A549 (cell line): ENCODE measurements at regions of chr16 and their contacts with region 1.

Region 1: GRCh38 chr16:30032083-30032819 is 1.2 kb upstream of the TLCD3B start:
- DNase-seq: peak in 1 of 2 experiments; percentile 79
- ATAC-seq: peak in 1 of 2 experiments; percentile 75; a peak in 3 of 6 replicates
- H3K4me3 ChIP-seq: no peak overlapping the region
- H3K27ac ChIP-seq: no peak overlapping the region
- H3K4me1 ChIP-seq: 0 out of 3 replicates have a peak, but pooled peaks cover 7% of the 10 kb centered on the region
- CTCF ChIP-seq: peak; percentile 91
- EP300 ChIP-seq: no peak
- POLR2A ChIP-seq: no peak
- RAD21 ChIP-seq: peak; percentile 91 to 94

Region 2: GRCh38 chr16:29694384-29695195 is 337.7 kb before region 1 on chr16:
- CTCF ChIA-PET with region 1: interaction called, 48 read pairs
- POLR2A ChIA-PET with region 1: no interaction called
- DNase-seq: no peak
- ATAC-seq: 0 out of 6 replicates have a peak, but pooled peaks of 1 of the 2 experiments have one; percentile 5
- H3K4me3 ChIP-seq: no peak overlapping the region
- H3K27ac ChIP-seq: no peak overlapping the region
- H3K4me1 ChIP-seq: peaks cover 5% of the 10 kb centered on the region; the same call in 1 of the 3 replicates
- CTCF ChIP-seq: no peak
- EP300 ChIP-seq: no peak
- POLR2A ChIP-seq: no peak
- RAD21 ChIP-seq: no peak

Region 3: DNA sequence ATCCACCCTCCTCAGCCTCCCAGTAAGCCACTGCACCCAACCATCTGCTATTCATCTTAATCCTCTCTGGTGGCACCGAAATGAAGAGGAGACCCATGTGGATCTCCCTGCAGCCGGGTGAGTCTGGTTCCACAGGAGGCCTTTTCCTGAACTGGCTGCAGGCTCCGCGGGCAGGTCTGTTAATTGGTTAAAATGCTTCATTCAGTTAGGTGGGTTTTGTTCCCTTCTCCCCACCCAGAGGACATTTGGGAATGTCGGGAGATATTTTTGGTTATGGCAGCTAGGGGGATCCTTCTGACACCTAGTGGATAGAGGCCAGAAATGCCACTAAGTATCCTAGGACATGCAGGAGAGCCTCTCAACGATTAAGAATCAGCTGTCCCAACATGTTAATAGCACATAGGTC is 303.1 kb before region 1 on chr16:
- CTCF ChIA-PET with region 1: interaction called, 14 read pairs
- POLR2A ChIA-PET with region 1: no interaction called
- DNase-seq: peak; percentile 68 to 83
- ATAC-seq: peak; percentile 96 to 98
- H3K4me3 ChIP-seq: peak overlapping the region; percentile 34; the same call in 2 of the 3 replicates
- H3K27ac ChIP-seq: peak overlapping the region; percentile 54 to 71; a peak in 4 of 6 replicates
- H3K4me1 ChIP-seq: 0 out of 3 replicates have a peak, but pooled peaks cover 3% of the 10 kb centered on the region
- CTCF ChIP-seq: peak; percentile 64
- EP300 ChIP-seq: no peak
- POLR2A ChIP-seq: no peak
- RAD21 ChIP-seq: peak; percentile 52; a peak in 4 of 5 replicates

Region 4: GRCh38 chr16:29815793-29816693 is 216.2 kb before region 1 on chr16 and contains the start of gene PAGR1:
- CTCF ChIA-PET with region 1: interaction called, 33 read pairs
- POLR2A ChIA-PET with region 1: interaction called, 6 read pairs
- DNase-seq: peak; percentile 95 to 100
- ATAC-seq: peak; percentile 49 to 72
- H3K4me3 ChIP-seq: peak within 1 kb of the TSS; percentile 92
- H3K27ac ChIP-seq: peak within 1 kb of the TSS; percentile 98 to 99
- H3K4me1 ChIP-seq: peaks cover 39% of the 10 kb centered on the region
- CTCF ChIP-seq: peak; percentile 92
- EP300 ChIP-seq: no peak
- POLR2A ChIP-seq: peak; percentile 88
- RAD21 ChIP-seq: peak; percentile 51 to 68
- polyA plus RNA-seq, gene PAGR1: 18.9 and 26.7 TPM in 2 replicates

Region 5: DNA sequence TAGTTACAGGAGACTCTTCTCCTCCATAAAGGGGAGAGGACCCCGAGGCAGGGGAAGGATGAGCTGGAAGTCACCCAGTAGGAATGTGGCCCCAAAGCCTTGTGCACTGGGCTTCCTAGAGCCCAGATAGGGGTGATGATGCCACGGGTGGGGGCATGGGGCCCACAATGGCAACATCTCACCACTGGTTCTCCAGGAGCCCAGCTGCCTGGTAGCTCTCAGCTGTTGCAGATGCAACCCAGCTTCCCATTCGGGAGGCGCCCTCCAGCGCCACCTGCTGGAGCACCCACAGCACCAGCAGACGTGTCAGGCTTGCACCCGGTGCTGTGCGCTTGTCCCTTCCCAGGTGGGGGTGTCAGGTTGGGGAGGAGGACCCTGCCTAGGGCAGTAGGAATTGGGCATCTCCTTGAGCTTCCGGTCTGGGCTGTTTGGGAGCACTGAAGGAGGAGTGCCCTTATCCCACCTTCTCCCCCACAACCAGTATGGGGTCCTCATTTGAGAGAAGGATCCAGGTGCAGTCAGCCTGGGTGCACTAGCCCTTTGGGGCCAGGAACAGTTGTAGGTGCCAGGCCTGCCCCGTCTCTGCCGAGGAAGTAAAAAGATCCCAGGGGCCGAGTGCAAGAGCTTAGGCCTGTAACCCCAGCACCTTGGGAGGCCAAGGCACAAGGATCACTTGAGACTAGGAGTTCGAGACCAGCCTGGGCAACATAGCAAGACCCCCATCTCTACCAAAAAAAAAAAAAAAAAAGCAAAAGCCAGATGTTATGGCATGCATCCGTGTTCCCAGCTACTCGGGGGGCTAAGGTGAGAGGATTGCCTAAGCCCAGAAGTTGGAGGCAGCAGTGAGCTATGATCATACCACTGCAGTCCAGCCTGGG is 183.6 kb before region 1 on chr16:
- CTCF ChIA-PET with region 1: interaction called, 13 read pairs
- POLR2A ChIA-PET with region 1: no interaction called
- DNase-seq: peak; percentile 77 to 81
- ATAC-seq: peak; percentile 92 to 95
- H3K4me3 ChIP-seq: no peak overlapping the region
- H3K27ac ChIP-seq: no peak overlapping the region
- H3K4me1 ChIP-seq: no peaks in the 10 kb centered on the region
- CTCF ChIP-seq: peak; percentile 89
- EP300 ChIP-seq: no peak
- POLR2A ChIP-seq: no peak
- RAD21 ChIP-seq: peak; percentile 78 to 86

Region 6: GRCh38 chr16:30005341-30006094 is 26.7 kb before region 1 on chr16:
- CTCF ChIA-PET with region 1: interaction called, 20 read pairs
- POLR2A ChIA-PET with region 1: no interaction called
- DNase-seq: peak; percentile 59 to 90
- ATAC-seq: peak; percentile 54 to 78; a peak in 5 of 6 replicates
- H3K4me3 ChIP-seq: no peak overlapping the region
- H3K27ac ChIP-seq: peak overlapping the region in 1 of 2 experiments; percentile 38; a peak in 3 of 6 replicates
- H3K4me1 ChIP-seq: peaks cover 10% of the 10 kb centered on the region; the same call in 2 of the 3 replicates
- CTCF ChIP-seq: peak; percentile 78
- EP300 ChIP-seq: no peak
- POLR2A ChIP-seq: no peak
- RAD21 ChIP-seq: peak; percentile 64 to 71

Region 7: DNA sequence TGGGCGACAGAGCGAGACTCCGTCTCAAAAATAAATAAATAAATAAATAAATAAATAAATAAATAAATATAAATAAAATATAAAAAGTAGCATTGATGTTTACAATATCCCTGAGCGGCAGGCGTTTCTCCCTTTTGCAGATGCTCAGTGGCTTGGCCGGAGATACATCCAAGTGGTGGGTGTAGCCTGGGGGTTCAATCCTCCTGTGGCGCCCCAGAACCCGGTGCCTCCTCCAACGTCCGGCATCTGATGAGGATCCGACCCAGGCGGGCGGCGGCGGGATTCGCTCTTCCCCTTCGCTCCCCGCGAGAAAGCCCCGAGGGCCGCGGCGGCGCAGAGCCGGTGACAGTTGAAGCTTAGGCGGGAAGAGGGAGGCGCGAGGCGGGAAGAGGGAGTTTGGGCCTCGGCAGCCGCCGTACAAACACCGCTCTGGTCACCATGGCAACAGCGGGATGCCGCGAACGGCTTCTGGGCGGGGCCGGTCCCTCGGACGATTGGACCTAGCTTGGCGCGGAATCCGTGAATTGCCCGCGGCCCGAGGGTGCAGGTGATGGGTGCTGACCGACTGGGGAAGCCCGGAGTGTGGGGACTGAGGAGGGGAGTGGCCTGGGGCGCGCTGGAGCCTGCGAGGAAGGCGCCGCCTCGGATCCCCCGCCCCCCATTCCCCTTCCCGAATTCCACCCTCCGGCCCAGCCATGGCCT is 20.6 kb after region 1 on chr16:
- CTCF ChIA-PET with region 1: interaction called, 36 read pairs
- POLR2A ChIA-PET with region 1: no interaction called
- DNase-seq: peak; percentile 94
- ATAC-seq: peak; percentile 74 to 81
- H3K4me3 ChIP-seq: peak overlapping the region; percentile 81
- H3K27ac ChIP-seq: peak overlapping the region; percentile 69 to 88
- H3K4me1 ChIP-seq: peaks cover 22% of the 10 kb centered on the region
- CTCF ChIP-seq: no peak
- EP300 ChIP-seq: no peak
- POLR2A ChIP-seq: no peak
- RAD21 ChIP-seq: no peak